ENCODE measurements at regions of chr17 and their contacts with region 1.

Region 1: DNA sequence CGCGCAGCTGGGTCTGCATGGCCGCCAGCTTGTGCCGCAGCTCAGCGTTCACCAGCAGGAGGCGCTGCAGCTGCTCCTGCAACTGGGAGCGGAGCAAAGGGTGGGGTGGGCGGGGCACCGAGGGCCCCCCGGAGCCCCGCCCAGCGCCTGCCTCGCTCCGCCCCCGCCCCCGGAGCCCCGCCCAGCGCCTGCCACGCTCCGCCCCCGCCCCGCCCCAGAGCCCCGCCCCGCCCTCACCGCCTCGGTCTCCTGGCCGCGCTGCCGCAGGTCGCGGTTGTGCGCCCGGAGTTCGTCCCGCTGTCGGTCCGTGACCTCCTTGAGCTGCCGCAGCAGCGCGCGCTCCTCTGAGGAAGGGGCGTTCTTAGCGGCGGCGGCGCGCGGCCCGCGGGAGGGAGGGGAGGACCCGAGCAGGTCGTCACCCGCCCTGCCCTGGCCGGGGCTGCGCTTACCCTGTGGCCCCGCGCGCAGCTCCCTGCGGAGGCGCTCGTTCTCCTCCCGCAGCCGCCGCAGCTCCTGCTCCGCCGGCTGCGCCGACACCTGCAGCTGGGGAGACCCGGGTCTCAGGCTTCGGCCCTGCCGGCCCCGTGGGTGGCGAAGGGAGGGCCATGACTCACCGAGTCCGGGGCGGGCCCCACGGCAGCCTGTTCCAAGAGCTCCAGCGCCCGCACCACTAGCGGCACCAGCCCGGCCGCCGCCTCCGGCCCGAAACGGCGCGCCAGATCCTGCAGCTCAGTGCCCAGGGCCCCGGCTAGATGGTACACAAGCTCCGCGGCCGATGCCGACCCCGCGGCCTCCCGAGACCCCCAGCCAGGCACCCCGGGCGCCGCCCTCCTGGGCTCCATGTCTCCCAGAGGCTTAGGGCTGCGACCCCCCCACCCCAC is 463 bp downstream of the RILP start:
- DNase-seq: peak; percentile 93 to 97
- ATAC-seq: peak; percentile 34 to 77 (median 62)
- H3K4me3 ChIP-seq: peak overlapping the region; percentile 56 to 94 (median 81)
- H3K27ac ChIP-seq: peak overlapping the region; percentile 97 to 100 (median 99)
- H3K4me1 ChIP-seq: peaks cover 34 to 61% (median 55%) of the 10 kb centered on the region in 9 donors
- H3K27me3 ChIP-seq: no peaks in the 10 kb centered on the region
- CTCF ChIP-seq: peak; percentile 75 to 95 (median 88)

Region 2: GRCh38 chr17:1251866-1252608 is 397.2 kb before region 1 on chr17:
- intact Hi-C with region 1: loop called in 1 of 10 experiments (anchors 10 kb)
- DNase-seq: peak; percentile 43 to 61
- ATAC-seq: peak in 6 of 8 donors; percentile 15 to 51 (median 33)
- H3K4me3 ChIP-seq: no peak overlapping the region
- H3K27ac ChIP-seq: peak overlapping the region in 6 of 10 donors; percentile 9 to 48 (median 36)
- H3K4me1 ChIP-seq: peaks cover 0 to 34% (median 21%) of the 10 kb centered on the region in 9 donors
- H3K27me3 ChIP-seq: peaks cover 0 to 21% (median 0%) of the 10 kb centered on the region in 7 donors
- CTCF ChIP-seq: no peak

Region 3: DNA sequence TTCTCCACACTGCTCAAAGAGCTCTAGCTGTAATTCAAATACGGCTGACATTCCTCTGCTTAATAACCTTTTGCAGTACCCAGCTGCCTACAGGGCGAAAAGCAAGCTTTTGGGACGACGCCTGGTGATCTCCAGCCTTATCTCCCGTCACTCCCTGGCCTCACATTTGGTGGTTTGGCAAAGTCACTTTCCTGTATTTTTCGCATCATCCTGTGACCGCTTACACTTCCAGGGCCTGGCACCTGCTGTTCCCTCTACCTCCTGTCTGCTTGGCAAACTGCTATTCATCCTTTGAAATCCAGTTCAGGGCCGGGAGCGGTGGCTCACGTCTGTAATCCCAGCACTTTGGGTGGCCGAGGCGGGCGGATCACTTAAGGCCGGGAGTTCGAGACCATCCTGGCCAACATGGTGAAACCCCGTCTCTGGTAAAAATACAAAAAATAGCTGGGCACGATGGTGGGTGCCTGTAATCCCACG is 381.7 kb before region 1 on chr17:
- intact Hi-C with region 1: loop called in 1 of 10 experiments (anchors 10 kb)
- DNase-seq: peak in 1 of 2 donors; percentile 34
- ATAC-seq: peak in 7 of 8 donors; percentile 10 to 64 (median 38)
- H3K4me3 ChIP-seq: peak overlapping the region; percentile 54 to 81 (median 72)
- H3K27ac ChIP-seq: peak overlapping the region; percentile 76 to 96 (median 94)
- H3K4me1 ChIP-seq: peaks cover 0 to 26% (median 12%) of the 10 kb centered on the region in 9 donors
- H3K27me3 ChIP-seq: peaks cover 11 to 41% (median 30%) of the 10 kb centered on the region in 7 donors
- CTCF ChIP-seq: no peak

Region 4: GRCh38 chr17:1561400-1562175 is 87.6 kb before region 1 on chr17:
- intact Hi-C with region 1: no loop called
- DNase-seq: peak in 1 of 2 donors; percentile 33
- ATAC-seq: peak; percentile 5 to 47 (median 28)
- H3K4me3 ChIP-seq: peak overlapping the region; percentile 50 to 91 (median 85)
- H3K27ac ChIP-seq: peak overlapping the region; percentile 24 to 92 (median 86)
- H3K4me1 ChIP-seq: peaks cover 4 to 55% (median 34%) of the 10 kb centered on the region in 9 donors
- H3K27me3 ChIP-seq: no peaks in the 10 kb centered on the region
- CTCF ChIP-seq: peak in 6 of 9 donors; percentile 8 to 51 (median 38)

Region 5: DNA sequence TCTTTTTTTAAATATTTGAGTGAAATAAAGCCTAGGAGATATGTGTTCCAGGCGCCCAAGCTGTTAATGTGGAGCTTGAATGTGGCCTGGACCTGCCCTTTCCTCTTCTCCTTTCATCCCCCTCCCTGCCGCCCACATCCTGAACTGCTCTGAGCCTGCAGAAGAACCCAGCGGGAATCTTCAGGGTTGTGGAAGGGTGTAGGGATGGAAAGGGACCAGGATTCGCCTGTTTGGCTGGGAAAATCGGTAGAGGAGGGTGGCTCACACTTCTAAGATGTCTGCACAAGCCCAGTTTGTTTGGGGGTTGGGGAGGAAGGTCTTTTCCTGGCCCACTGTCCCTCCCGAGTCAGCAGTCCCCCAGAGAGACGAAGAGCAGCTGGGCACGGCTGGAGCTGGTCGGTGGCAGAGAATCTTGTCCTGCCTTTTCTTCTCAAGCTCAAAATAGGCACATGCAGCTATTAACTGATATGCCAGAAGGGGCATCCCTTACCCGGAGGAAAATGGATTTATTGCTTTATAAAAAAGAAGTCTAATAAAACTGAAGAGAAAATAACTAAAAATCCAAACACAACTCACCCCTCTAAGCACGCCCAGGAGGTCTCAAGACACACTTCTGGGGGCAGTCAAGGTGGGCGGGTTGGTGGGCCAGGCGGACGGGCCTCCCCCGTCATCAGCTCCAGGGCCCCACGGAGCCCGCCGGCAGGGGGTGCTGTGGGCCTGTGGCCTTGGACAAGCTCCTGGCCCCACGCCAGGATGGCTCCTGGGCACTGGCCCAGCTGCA is 75.1 kb before region 1 on chr17:
- intact Hi-C with region 1: loop called in 8 of 10 experiments (anchors 1 to 5 kb)
- DNase-seq: peak; percentile 85 to 91
- ATAC-seq: peak; percentile 63 to 83 (median 72)
- H3K4me3 ChIP-seq: peak overlapping the region in 1 of 10 donors; percentile 6
- H3K27ac ChIP-seq: peak overlapping the region in 9 of 10 donors; percentile 55 to 94 (median 69)
- H3K4me1 ChIP-seq: peaks cover 26 to 54% (median 46%) of the 10 kb centered on the region in 9 donors
- H3K27me3 ChIP-seq: no peaks in the 10 kb centered on the region
- CTCF ChIP-seq: peak; percentile 95 to 99 (median 97)

Region 6: DNA sequence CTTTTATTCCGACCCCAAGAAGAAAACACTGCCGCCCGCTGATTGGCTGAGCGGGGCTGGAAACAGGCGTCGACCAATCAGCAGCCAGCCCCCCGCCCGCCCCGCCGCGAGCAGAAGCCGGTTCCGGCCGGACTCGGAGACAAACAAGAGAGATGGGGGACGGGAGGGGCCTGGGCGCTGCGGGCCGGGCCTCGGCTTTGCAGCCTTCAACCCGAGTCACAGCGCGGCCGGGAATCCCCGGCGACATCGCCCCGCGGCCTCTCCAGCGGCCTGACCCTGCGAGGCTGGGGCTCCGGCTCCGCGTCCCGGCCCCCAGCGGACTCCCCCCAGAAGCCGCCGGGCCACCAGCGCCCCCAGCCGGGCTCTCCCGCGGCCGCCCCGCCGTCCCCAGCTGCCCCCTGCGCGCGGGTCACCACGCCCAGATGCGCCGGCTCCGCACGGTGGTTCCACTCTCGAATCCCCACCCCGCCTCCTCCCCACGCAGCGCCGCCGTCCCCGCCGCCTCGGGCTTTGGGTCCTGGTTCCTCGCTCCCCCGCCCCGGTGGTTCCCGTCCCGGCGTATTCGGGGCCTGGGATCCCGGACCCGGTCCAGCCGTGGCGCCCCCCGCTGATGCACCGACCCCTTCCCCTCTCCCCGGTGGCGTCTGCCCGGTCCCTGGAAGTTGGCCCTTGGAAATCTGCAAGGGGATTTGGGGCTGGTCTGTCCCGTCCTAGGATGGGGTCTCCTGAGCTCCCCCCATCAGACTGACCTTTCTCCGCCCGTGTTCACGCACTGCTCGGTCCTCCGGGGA is 20.2 kb before region 1 on chr17:
- intact Hi-C with region 1: loop called in 1 of 10 experiments (anchors 2 kb)
- DNase-seq: peak; percentile 92 to 95
- ATAC-seq: peak; percentile 84 to 92 (median 90)
- H3K4me3 ChIP-seq: peak overlapping the region; percentile 73 to 93 (median 80)
- H3K27ac ChIP-seq: peak overlapping the region; percentile 68 to 99 (median 92)
- H3K4me1 ChIP-seq: peaks cover 3 to 54% (median 21%) of the 10 kb centered on the region in 9 donors
- H3K27me3 ChIP-seq: no peaks in the 10 kb centered on the region
- CTCF ChIP-seq: peak in 8 of 9 donors; percentile 35 to 73 (median 48)

Region 7: GRCh38 chr17:2029911-2030778 is 380.9 kb after region 1 on chr17 and contains the start of gene DPH1:
- intact Hi-C with region 1: loop called in 1 of 10 experiments (anchors 10 kb)
- DNase-seq: peak; percentile 90
- ATAC-seq: peak; percentile 84 to 95 (median 89)
- H3K4me3 ChIP-seq: peak within 1 kb of the TSS; percentile 74 to 99 (median 95)
- H3K27ac ChIP-seq: peak within 1 kb of the TSS in 9 of 10 donors; percentile 23 to 84 (median 72)
- H3K4me1 ChIP-seq: peaks cover 10 to 43% (median 29%) of the 10 kb centered on the region in 9 donors
- H3K27me3 ChIP-seq: peaks cover 0 to 46% (median 19%) of the 10 kb centered on the region in 7 donors
- CTCF ChIP-seq: no peak
- total RNA-seq, gene DPH1: 22.8 to 40.0 (median 25.9) TPM